ENCODE measurements at regions of chr10 and their contacts with region 1.

Region 1: DNA sequence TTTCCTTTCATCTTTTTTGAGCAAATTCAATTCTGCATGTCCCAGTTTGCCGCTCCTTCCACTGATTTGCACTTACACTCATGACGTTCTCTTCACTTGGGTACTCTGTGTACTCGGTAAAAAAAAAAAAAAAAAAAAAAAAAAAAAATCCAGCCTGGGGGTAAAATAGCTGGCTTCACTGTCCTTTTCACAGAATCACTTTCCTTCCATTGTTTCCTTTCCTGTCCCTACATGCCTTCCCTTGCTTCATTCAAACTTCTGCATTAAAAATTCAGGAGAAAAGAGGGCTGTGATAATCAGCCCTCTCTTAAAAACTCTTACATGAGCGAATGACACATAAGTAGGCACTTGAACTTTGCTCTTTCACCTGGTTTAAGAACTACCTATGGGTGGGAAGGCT is 8.7 kb downstream of the ANKRD1 start:
- DNase-seq: no peak
- H3K4me3 ChIP-seq: no peak overlapping the region
- H3K4me3 Mint-ChIP-seq: no peak overlapping the region
- H3K27ac ChIP-seq: no peak overlapping the region
- H3K27ac Mint-ChIP-seq: peak overlapping the region in 1 of 7 donors; percentile 61
- H3K4me1 ChIP-seq: no peaks in the 10 kb centered on the region
- H3K4me1 Mint-ChIP-seq: peaks cover 0 to 4% (median 2%) of the 10 kb centered on the region in 4 donors
- H3K27me3 ChIP-seq: no peaks in the 10 kb centered on the region
- H3K27me3 Mint-ChIP-seq: peaks cover 1 to 4% of the 10 kb centered on the region in 2 donors

Region 2: GRCh38 chr10:90741926-90742565 is 170.1 kb before region 1 on chr10:
- CTCF ChIA-PET with region 1: no interaction called
- POLR2A ChIA-PET with region 1: no interaction called
- intact Hi-C with region 1: no loop called
- DNase-seq: no peak
- H3K4me3 ChIP-seq: no peak overlapping the region
- H3K4me3 Mint-ChIP-seq: no peak overlapping the region
- H3K27ac ChIP-seq: no peak overlapping the region
- H3K27ac Mint-ChIP-seq: no peak overlapping the region
- H3K4me1 ChIP-seq: no peaks in the 10 kb centered on the region
- H3K4me1 Mint-ChIP-seq: no peaks in the 10 kb centered on the region
- H3K27me3 ChIP-seq: no peaks in the 10 kb centered on the region
- H3K27me3 Mint-ChIP-seq: peaks cover 6 to 7% of the 10 kb centered on the region in 2 donors

Region 3: GRCh38 chr10:90893190-90893589 is 19.0 kb before region 1 on chr10:
- CTCF ChIA-PET with region 1: interaction called, 14 read pairs
- POLR2A ChIA-PET with region 1: no interaction called
- intact Hi-C with region 1: no loop called
- DNase-seq: no peak
- H3K4me3 ChIP-seq: no peak overlapping the region
- H3K4me3 Mint-ChIP-seq: no peak overlapping the region
- H3K27ac ChIP-seq: no peak overlapping the region
- H3K27ac Mint-ChIP-seq: peak overlapping the region in 1 of 7 donors; percentile 6
- H3K4me1 ChIP-seq: peaks cover 14% of the 10 kb centered on the region
- H3K4me1 Mint-ChIP-seq: peaks cover 17 to 24% (median 20%) of the 10 kb centered on the region in 4 donors
- H3K27me3 ChIP-seq: no peaks in the 10 kb centered on the region
- H3K27me3 Mint-ChIP-seq: no peaks in the 10 kb centered on the region